ENCODE measurements at regions of chr17 and their contacts with region 1.

Region 1: GRCh38 chr17:50345432-50346312 is at the start of gene XYLT2:
- DNase-seq: peak; percentile 82
- ATAC-seq: peak; percentile 66
- H3K4me3 Mint-ChIP-seq: peak within 1 kb of the TSS; percentile 93
- H3K27ac Mint-ChIP-seq: peak within 1 kb of the TSS; percentile 57; the same call in 1 of the 2 replicates
- H3K4me1 Mint-ChIP-seq: peaks cover 32% of the 10 kb centered on the region
- H3K27me3 Mint-ChIP-seq: peaks cover 14% of the 10 kb centered on the region
- CTCF ChIP-seq: no peak
- total RNA-seq, gene XYLT2: 35.7 to 39.7 TPM (median 37.9 TPM) in 3 replicates

Region 2: GRCh38 chr17:50331085-50331791 is 14.4 kb before region 1 on chr17:
- CTCF ChIA-PET with region 1: interaction called, 17 read pairs
- POLR2A ChIA-PET with region 1: no interaction called
- DNase-seq: no peak
- ATAC-seq: no peak
- H3K4me3 Mint-ChIP-seq: no peak overlapping the region
- H3K27ac Mint-ChIP-seq: no peak overlapping the region
- H3K4me1 Mint-ChIP-seq: peaks cover 17% of the 10 kb centered on the region
- H3K27me3 Mint-ChIP-seq: no peaks in the 10 kb centered on the region
- CTCF ChIP-seq: no peak